ENCODE measurements at regions of chr14 and their contacts with region 1.

Region 1: GRCh38 chr14:49633640-49634546 is 1.2 kb downstream of the DNAAF2 start:
- DNase-seq: peak; percentile 97
- H3K4me3 Mint-ChIP-seq: peak overlapping the region; percentile 91
- H3K27ac Mint-ChIP-seq: peak overlapping the region; percentile 95
- H3K4me1 Mint-ChIP-seq: peaks cover 42% of the 10 kb centered on the region
- H3K27me3 Mint-ChIP-seq: no peaks in the 10 kb centered on the region

Region 2: GRCh38 chr14:49598485-49599300 is 35.2 kb before region 1 on chr14 and contains the start of gene LRR1:
- CTCF ChIA-PET with region 1: interaction called, 9 read pairs
- POLR2A ChIA-PET with region 1: interaction called, 6 read pairs
- intact Hi-C with region 1: loop called (anchors 1 kb)
- DNase-seq: peak; percentile 90
- H3K4me3 Mint-ChIP-seq: peak within 1 kb of the TSS; percentile 96
- H3K27ac Mint-ChIP-seq: peak within 1 kb of the TSS; percentile 97
- H3K4me1 Mint-ChIP-seq: peaks cover 18% of the 10 kb centered on the region
- H3K27me3 Mint-ChIP-seq: no peaks in the 10 kb centered on the region
- total RNA-seq, gene LRR1: 51.8 to 52.0 TPM

Region 3: DNA sequence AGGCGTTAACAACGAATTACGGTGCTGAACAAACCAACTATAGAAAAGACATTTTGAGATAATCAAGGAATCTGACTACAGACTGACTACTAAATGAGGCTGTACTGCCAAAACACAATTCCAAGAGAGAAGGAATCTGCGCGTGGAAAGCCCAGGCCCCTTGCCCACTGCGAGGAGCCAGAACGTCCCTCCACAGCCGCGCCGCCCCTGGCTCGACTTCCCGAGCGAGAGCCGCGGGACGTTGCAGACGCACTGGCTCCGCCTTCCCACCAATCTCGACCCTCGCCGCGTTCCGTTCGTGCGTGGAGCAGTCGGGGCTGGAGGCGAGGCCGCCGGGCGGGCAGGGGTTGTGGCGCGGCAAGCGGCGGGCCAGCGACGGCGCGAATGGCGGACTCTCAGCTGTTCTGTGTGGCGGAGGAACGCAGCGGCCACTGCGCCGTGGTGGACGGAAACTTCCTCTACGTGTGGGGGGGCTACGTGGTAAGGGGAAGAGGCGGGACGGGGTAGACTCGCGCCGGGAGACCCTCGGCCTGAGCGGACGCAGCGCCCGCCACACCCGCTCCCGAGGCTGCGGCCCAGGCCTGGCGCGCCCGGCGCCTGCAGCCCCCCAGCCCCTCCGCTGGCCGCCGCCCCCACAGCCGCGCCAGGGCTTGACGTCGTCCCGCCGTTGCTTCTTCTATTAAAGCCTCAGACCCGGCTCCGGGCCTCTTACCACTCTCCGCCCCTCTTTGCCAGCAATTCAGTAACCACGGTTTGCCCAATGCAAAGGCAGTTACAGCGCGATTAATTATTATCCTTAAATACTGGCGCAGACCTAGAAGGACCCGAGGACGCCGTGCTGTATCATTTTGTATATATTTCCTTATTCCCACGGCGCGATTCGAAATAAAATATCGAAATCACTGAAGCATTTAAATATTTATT is 59.2 kb after region 1 on chr14 and contains the start of gene KLHDC1:
- CTCF ChIA-PET with region 1: interaction called, 6 read pairs
- POLR2A ChIA-PET with region 1: interaction called, 8 read pairs
- intact Hi-C with region 1: loop called (anchors 1 kb)
- DNase-seq: peak; percentile 86
- H3K4me3 Mint-ChIP-seq: peak within 1 kb of the TSS; percentile 77
- H3K27ac Mint-ChIP-seq: peak within 1 kb of the TSS; percentile 40
- H3K4me1 Mint-ChIP-seq: peaks cover 27% of the 10 kb centered on the region
- H3K27me3 Mint-ChIP-seq: no peaks in the 10 kb centered on the region
- total RNA-seq, gene KLHDC1: 1.4 to 1.9 TPM

Region 4: DNA sequence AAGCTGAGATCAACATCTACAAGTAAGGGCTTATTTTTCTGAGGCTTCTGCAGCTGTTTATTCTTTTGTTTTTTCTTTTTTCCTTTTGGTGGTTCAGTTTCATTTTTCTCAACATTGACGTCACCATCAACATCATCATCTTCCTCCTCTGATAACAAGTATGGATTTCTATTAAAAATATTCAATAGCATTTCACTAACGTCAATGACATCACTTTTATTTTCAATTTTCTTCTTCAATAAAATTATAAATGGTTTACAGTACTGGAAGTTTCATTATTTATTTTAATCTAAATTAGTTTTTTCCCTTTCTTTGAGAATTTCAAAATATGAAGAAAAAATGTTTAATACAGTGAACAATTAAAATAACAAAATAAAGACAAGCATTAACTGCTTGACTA is 194.7 kb after region 1 on chr14:
- CTCF ChIA-PET with region 1: interaction called, 13 read pairs
- POLR2A ChIA-PET with region 1: no interaction called
- intact Hi-C with region 1: loop called (anchors 1 kb)
- DNase-seq: no peak
- H3K4me3 Mint-ChIP-seq: no peak overlapping the region
- H3K27ac Mint-ChIP-seq: no peak overlapping the region
- H3K4me1 Mint-ChIP-seq: peaks cover 2% of the 10 kb centered on the region
- H3K27me3 Mint-ChIP-seq: no peaks in the 10 kb centered on the region

Region 5: GRCh38 chr14:50116181-50116956 is 482.5 kb after region 1 on chr14 and contains the start of gene VCPKMT:
- CTCF ChIA-PET with region 1: no interaction called
- POLR2A ChIA-PET with region 1: no interaction called
- intact Hi-C with region 1: loop called (anchors 2 kb)
- DNase-seq: peak; percentile 96
- H3K4me3 Mint-ChIP-seq: peak within 1 kb of the TSS; percentile 98
- H3K27ac Mint-ChIP-seq: peak within 1 kb of the TSS; percentile 95
- H3K4me1 Mint-ChIP-seq: peaks cover 37% of the 10 kb centered on the region
- H3K27me3 Mint-ChIP-seq: no peaks in the 10 kb centered on the region
- total RNA-seq, gene VCPKMT: 7.7 to 10.1 TPM

Region 6: DNA sequence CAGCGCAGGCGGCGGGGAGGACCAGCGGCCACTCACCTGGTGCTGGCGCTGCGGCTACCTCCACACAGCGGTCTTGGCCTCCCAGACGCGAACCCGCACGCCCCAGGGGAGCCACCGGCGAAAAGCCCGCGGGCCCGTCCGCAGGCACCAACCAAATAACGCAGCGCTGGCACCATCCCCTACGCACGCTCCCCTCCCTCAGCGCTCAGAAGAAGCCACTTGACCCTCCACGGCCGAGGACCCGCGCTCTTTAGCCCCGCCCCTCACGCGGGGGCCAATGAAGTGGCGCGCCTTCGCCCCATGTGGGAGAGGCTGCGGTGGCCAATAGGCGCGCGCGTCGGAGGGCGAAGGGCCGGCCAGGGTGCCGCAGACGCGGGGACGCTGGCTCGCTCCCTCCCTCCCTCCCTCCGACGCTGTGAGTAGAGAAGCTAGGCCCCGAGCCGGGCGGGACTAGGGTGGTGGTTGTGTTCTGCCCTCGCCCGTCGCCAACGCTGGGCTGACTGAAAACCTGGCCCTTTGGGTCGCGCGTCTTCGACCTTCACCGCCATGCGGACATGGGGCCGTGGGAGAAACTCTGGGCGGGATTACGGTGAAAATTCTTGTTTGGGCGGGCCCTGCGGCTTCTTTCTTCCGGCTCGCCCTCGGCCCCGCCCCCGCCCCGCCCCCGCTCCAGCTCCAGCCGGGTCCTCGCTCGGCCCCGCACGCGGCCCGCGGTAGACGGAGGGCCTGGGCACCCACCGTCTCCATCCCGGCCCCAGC is 678.3 kb after region 1 on chr14 and contains the starts of genes DMAC2L and L2HGDH:
- CTCF ChIA-PET with region 1: no interaction called
- POLR2A ChIA-PET with region 1: no interaction called
- intact Hi-C with region 1: loop called (anchors 1 kb)
- DNase-seq: peak; percentile 93
- H3K4me3 Mint-ChIP-seq: peak within 1 kb of the TSS; percentile 96
- H3K27ac Mint-ChIP-seq: peak within 1 kb of the TSS; percentile 94
- H3K4me1 Mint-ChIP-seq: peaks cover 37% of the 10 kb centered on the region
- H3K27me3 Mint-ChIP-seq: no peaks in the 10 kb centered on the region
- total RNA-seq, gene DMAC2L: 13.4 to 13.9 TPM
- total RNA-seq, gene L2HGDH: 15.0 to 15.2 TPM

Region 7: GRCh38 chr14:50532502-50533240 is 898.8 kb after region 1 on chr14 and contains the start of gene MAP4K5:
- CTCF ChIA-PET with region 1: no interaction called
- POLR2A ChIA-PET with region 1: no interaction called
- intact Hi-C with region 1: loop called (anchors 1 kb)
- DNase-seq: peak; percentile 91
- H3K4me3 Mint-ChIP-seq: peak within 1 kb of the TSS; percentile 85
- H3K27ac Mint-ChIP-seq: peak within 1 kb of the TSS; percentile 58
- H3K4me1 Mint-ChIP-seq: peaks cover 42% of the 10 kb centered on the region
- H3K27me3 Mint-ChIP-seq: no peaks in the 10 kb centered on the region
- total RNA-seq, gene MAP4K5: 14.6 to 15.6 TPM

Measured in activated CD4-positive, alpha-beta memory T cell treated with anti-CD3 and anti-CD28 coated beads for 36 hours (primary cell).